ENCODE measurements at regions of chr3 and their contacts with region 1.

Region 1: DNA sequence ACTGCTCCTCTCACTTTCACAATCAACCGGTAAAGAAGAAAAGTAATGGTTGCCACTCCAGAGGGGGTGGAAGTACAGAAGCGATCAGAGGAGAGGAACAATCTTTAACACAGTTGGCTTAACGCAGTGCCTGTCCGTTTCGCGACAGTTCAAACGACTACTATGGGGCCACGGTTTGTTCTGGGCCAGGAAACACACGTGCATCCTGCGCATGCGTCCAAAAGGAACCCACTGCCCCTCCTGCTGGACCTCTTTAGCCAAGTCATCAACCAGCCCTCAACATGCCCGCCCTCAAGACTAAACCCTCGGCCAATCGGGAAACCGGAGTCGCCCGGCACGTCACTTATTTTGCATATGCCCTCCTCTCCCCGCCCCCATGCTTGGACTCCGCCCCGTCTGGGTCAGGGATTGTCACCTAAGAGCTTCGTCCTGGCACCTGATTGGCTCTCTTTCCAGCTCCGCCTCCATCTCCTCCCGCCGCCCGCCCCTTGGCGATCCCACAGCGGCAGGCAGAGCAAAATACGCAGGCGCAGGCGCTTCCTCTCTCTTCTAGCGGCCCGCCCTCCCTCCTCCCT is 345 bp upstream of the CDV3 start:
- DNase-seq: peak; percentile 100
- ATAC-seq: peak; percentile 81
- H3K4me3 Mint-ChIP-seq: peak overlapping the region; percentile 85
- H3K27ac Mint-ChIP-seq: peak overlapping the region; percentile 99
- H3K4me1 Mint-ChIP-seq: peaks cover 74% of the 10 kb centered on the region
- H3K27me3 Mint-ChIP-seq: no peaks in the 10 kb centered on the region
- CTCF ChIP-seq: no peak

Region 2: GRCh38 chr3:132659365-132660051 is 913.6 kb before region 1 on chr3 and contains the start of gene ACAD11:
- CTCF ChIA-PET with region 1: no interaction called
- POLR2A ChIA-PET with region 1: interaction called, 3 read pairs
- intact Hi-C with region 1: loop called (anchors 10 kb)
- DNase-seq: peak; percentile 55
- ATAC-seq: peak; percentile 74
- H3K4me3 Mint-ChIP-seq: peak within 1 kb of the TSS; percentile 97
- H3K27ac Mint-ChIP-seq: peak within 1 kb of the TSS; percentile 93
- H3K4me1 Mint-ChIP-seq: peaks cover 35% of the 10 kb centered on the region
- H3K27me3 Mint-ChIP-seq: no peaks in the 10 kb centered on the region
- CTCF ChIP-seq: no peak
- total RNA-seq, gene ACAD11: 16.4 and 24.0 TPM in 2 replicates

Region 3: GRCh38 chr3:133441867-133442270 is 131.3 kb before region 1 on chr3:
- CTCF ChIA-PET with region 1: interaction called, 8 read pairs
- POLR2A ChIA-PET with region 1: interaction called, 149 read pairs
- intact Hi-C with region 1: no loop called
- DNase-seq: no peak
- ATAC-seq: peak; percentile 72
- H3K4me3 Mint-ChIP-seq: peak overlapping the region; percentile 71
- H3K27ac Mint-ChIP-seq: peak overlapping the region; percentile 75
- H3K4me1 Mint-ChIP-seq: peaks cover 46% of the 10 kb centered on the region
- H3K27me3 Mint-ChIP-seq: no peaks in the 10 kb centered on the region
- CTCF ChIP-seq: no peak

Region 4: DNA sequence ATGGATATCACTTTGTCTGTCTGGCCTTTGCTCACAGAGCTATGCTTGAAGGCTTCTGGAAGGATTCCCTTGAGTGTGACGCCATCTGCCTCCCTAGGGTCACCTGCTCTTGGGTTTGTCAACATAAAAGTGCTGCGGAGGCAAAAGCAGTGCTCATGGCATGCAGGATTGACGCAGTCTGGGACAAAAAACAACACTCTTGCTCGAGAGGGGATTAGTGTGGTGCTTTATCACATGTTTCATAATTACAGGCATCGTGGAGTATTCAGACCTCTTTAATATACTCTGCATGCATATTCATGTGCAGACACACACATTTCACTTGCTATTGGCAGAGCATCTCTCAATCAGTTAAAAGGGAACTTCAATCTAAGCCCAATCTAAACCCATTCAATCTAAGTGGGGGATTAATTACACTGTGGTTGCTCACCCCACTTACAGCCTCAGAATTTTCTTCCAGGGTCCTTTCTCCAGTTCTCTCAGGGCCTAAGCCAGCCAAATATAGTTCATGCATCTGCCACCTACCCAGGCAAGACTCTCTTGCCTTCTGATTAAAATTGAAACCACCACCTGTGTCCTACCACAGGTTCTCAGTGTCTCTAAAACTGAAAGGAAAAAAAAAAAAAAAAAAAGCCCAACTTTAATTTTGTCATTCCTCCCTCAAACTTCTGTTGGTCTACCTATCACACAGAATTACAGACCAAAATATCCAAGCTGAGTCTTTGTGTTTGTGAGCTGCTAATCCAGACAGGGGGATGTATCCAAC is 97.7 kb before region 1 on chr3:
- CTCF ChIA-PET with region 1: interaction called, 5 read pairs
- POLR2A ChIA-PET with region 1: interaction called, 98 read pairs
- intact Hi-C with region 1: loop called (anchors 1 kb)
- DNase-seq: no peak
- ATAC-seq: peak; percentile 80
- H3K4me3 Mint-ChIP-seq: peak overlapping the region; percentile 64
- H3K27ac Mint-ChIP-seq: peak overlapping the region; percentile 92
- H3K4me1 Mint-ChIP-seq: peaks cover 71% of the 10 kb centered on the region
- H3K27me3 Mint-ChIP-seq: no peaks in the 10 kb centered on the region
- CTCF ChIP-seq: no peak

Region 5: DNA sequence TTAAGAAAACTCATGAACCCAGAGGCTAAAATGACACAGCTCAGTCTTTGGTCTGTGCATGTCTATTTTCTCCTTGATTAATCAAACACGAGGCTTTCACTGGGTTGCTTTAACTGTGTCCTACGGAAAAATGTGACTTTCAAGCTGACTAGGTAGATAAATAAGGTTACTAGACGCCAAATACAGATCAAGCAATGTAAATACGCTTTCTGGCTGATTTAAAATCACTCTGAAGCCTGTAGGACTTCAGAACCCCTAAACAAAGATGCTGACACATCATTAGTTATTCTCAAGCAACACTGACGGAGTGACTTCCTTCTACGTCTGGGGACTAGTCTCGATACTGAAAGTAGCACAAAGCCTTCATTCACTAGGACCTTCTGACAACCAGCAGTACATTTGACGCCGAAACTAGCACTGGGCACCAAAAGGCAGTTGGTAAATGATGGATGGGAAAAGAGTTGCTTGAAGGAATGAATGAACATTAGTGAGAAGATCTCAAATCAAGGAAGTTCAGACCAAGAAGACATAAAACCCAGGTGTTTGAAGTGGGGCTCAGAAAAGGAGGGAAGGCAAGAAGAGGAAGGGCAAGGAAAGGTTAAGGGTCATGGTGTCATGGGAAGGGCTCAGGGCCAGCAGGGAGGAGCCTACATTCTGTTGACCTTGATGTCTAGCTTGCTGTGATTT is 66.8 kb before region 1 on chr3:
- CTCF ChIA-PET with region 1: interaction called, 3 read pairs
- POLR2A ChIA-PET with region 1: interaction called, 18 read pairs
- intact Hi-C with region 1: loop called (anchors 1 kb)
- DNase-seq: no peak
- ATAC-seq: peak; percentile 97
- H3K4me3 Mint-ChIP-seq: peak overlapping the region; percentile 56
- H3K27ac Mint-ChIP-seq: peak overlapping the region; percentile 60
- H3K4me1 Mint-ChIP-seq: peaks cover 13% of the 10 kb centered on the region
- H3K27me3 Mint-ChIP-seq: no peaks in the 10 kb centered on the region
- CTCF ChIP-seq: no peak

Region 6: DNA sequence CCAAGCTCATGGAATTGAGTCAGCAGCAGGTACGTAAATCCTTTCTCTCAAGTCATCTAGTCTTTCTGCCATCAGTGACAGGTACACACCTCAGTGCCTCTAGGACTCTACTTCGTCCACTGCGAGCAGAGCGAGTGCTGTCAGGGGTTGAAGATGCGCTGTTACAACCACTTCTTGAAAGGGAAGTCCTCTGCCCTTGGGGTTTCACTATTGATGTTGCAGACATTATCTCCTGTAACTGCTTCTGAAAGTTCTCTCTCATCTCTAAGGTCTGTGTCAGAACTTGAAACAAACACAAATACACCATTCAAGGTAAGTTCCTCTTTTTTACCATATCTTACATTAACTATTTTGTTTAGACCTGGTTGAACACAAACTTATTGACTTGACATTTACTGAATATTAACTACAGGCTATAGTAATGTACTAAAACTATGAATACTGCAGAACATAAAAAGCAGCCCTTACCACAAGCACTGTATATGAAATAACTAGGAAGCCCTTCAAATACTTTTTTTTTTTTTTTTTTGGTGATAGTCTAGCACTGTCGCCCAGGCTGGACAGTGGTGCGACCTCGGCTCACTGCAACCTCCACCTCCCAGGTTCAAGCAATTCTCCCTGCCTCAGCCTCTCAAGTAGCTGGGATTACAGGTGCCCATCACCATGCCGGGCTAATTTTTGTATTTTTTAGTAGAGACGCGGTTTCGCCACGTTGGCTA is 47.1 kb after region 1 on chr3:
- CTCF ChIA-PET with region 1: no interaction called
- POLR2A ChIA-PET with region 1: interaction called, 8 read pairs
- intact Hi-C with region 1: loop called (anchors 1 kb)
- DNase-seq: no peak
- ATAC-seq: peak; percentile 98
- H3K4me3 Mint-ChIP-seq: no peak overlapping the region
- H3K27ac Mint-ChIP-seq: peak overlapping the region; percentile 86
- H3K4me1 Mint-ChIP-seq: peaks cover 15% of the 10 kb centered on the region
- H3K27me3 Mint-ChIP-seq: no peaks in the 10 kb centered on the region
- CTCF ChIP-seq: no peak

Region 7: GRCh38 chr3:133927540-133928066 is 354.5 kb after region 1 on chr3:
- CTCF ChIA-PET with region 1: no interaction called
- POLR2A ChIA-PET with region 1: no interaction called
- intact Hi-C with region 1: loop called (anchors 1 kb)
- DNase-seq: peak; percentile 86
- ATAC-seq: peak; percentile 98
- H3K4me3 Mint-ChIP-seq: peak overlapping the region; percentile 77
- H3K27ac Mint-ChIP-seq: no peak overlapping the region
- H3K4me1 Mint-ChIP-seq: peaks cover 9% of the 10 kb centered on the region
- H3K27me3 Mint-ChIP-seq: peaks cover 16% of the 10 kb centered on the region
- CTCF ChIP-seq: peak; percentile 23